B cell (primary cell): ENCODE measurements at regions of chr10 and their contacts with region 1.

Region 1: GRCh38 chr10:123154092-123154921 is at the start of gene BUB3:
- DNase-seq: peak; percentile 99
- ATAC-seq: peak; percentile 89
- H3K4me3 ChIP-seq: peak within 1 kb of the TSS; percentile 71 to 99 (median 99)
- H3K4me3 Mint-ChIP-seq: peak within 1 kb of the TSS; percentile 97
- H3K27ac ChIP-seq: peak within 1 kb of the TSS; percentile 84 to 87
- H3K27ac Mint-ChIP-seq: peak within 1 kb of the TSS; percentile 98
- H3K4me1 ChIP-seq: peaks cover 42 to 43% of the 10 kb centered on the region in 2 donors
- H3K4me1 Mint-ChIP-seq: peaks cover 61% of the 10 kb centered on the region
- H3K27me3 ChIP-seq: peaks cover 0 to 39% (median 29%) of the 10 kb centered on the region in 4 experiments
- H3K27me3 Mint-ChIP-seq: peaks cover 18% of the 10 kb centered on the region
- CTCF ChIP-seq: no peak
- total RNA-seq, gene BUB3: 112 and 115 TPM in 2 replicates

Region 2: GRCh38 chr10:121927841-121928527 is 1226.3 kb before region 1 on chr10 and contains the start of gene ATE1:
- CTCF ChIA-PET with region 1: no interaction called
- POLR2A ChIA-PET with region 1: no interaction called
- intact Hi-C with region 1: loop called (anchors 5 kb)
- DNase-seq: peak; percentile 89
- ATAC-seq: peak; percentile 93
- H3K4me3 ChIP-seq: peak within 1 kb of the TSS; percentile 71 to 99 (median 82)
- H3K4me3 Mint-ChIP-seq: peak within 1 kb of the TSS; percentile 96
- H3K27ac ChIP-seq: peak within 1 kb of the TSS; percentile 96 to 97
- H3K27ac Mint-ChIP-seq: peak within 1 kb of the TSS; percentile 94
- H3K4me1 ChIP-seq: peaks cover 10 to 16% of the 10 kb centered on the region in 2 donors
- H3K4me1 Mint-ChIP-seq: peaks cover 19% of the 10 kb centered on the region
- H3K27me3 ChIP-seq: no peaks in the 10 kb centered on the region
- H3K27me3 Mint-ChIP-seq: no peaks in the 10 kb centered on the region
- CTCF ChIP-seq: no peak
- total RNA-seq, gene ATE1: 32.0 and 40.3 TPM in 2 replicates

Region 3: GRCh38 chr10:123008439-123009205 is 145.7 kb before region 1 on chr10 and contains the starts of genes ACADSB and IKZF5:
- CTCF ChIA-PET with region 1: interaction called, 3 read pairs
- POLR2A ChIA-PET with region 1: interaction called, 4 read pairs
- intact Hi-C with region 1: loop called (anchors 1 kb)
- DNase-seq: peak; percentile 97
- ATAC-seq: peak; percentile 93
- H3K4me3 ChIP-seq: peak within 1 kb of the TSS; percentile 63 to 100 (median 95)
- H3K4me3 Mint-ChIP-seq: peak within 1 kb of the TSS; percentile 98
- H3K27ac ChIP-seq: peak within 1 kb of the TSS; percentile 92 to 98
- H3K27ac Mint-ChIP-seq: peak within 1 kb of the TSS; percentile 98
- H3K4me1 ChIP-seq: peaks cover 22 to 25% of the 10 kb centered on the region in 2 donors
- H3K4me1 Mint-ChIP-seq: peaks cover 48% of the 10 kb centered on the region
- H3K27me3 ChIP-seq: no peaks in the 10 kb centered on the region
- H3K27me3 Mint-ChIP-seq: no peaks in the 10 kb centered on the region
- CTCF ChIP-seq: no peak
- total RNA-seq, gene ACADSB: 27.8 and 27.9 TPM in 2 replicates
- total RNA-seq, gene IKZF5: 24.0 and 24.6 TPM in 2 replicates

Region 4: DNA sequence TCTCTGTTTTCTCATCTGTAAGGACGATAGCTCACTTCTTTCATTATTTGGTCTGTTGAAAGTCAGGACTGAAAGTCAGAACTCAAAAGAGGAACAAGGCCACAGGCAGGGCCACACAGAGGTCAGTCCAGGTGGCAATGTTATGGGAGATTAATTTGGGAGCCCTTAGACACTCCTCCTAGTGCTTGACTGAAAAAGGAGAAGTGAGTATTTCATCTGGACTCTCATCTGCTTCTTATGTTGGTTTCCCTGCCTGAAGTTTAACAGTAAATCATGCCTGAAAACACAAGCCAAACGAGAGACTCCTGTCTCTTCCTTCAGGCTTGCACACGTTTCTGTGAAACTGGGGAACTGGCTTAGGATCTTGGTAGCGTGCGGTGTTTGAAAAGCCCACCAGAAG is 248.3 kb after region 1 on chr10:
- CTCF ChIA-PET with region 1: no interaction called
- POLR2A ChIA-PET with region 1: no interaction called
- intact Hi-C with region 1: loop called (anchors 5 kb)
- DNase-seq: peak; percentile 83
- ATAC-seq: peak; percentile 98
- H3K4me3 ChIP-seq: no peak overlapping the region
- H3K4me3 Mint-ChIP-seq: peak overlapping the region; percentile 67
- H3K27ac ChIP-seq: peak overlapping the region; percentile 20 to 45
- H3K27ac Mint-ChIP-seq: peak overlapping the region; percentile 88
- H3K4me1 ChIP-seq: peaks cover 30 to 56% of the 10 kb centered on the region in 2 donors
- H3K4me1 Mint-ChIP-seq: peaks cover 50% of the 10 kb centered on the region
- H3K27me3 ChIP-seq: no peaks in the 10 kb centered on the region
- H3K27me3 Mint-ChIP-seq: no peaks in the 10 kb centered on the region
- CTCF ChIP-seq: no peak

Region 5: GRCh38 chr10:124916585-124917427 is 1762.5 kb after region 1 on chr10:
- CTCF ChIA-PET with region 1: no interaction called
- POLR2A ChIA-PET with region 1: no interaction called
- intact Hi-C with region 1: loop called (anchors 2 kb)
- DNase-seq: peak; percentile 98
- ATAC-seq: peak; percentile 89
- H3K4me3 ChIP-seq: peak overlapping the region; percentile 63 to 87 (median 79)
- H3K4me3 Mint-ChIP-seq: peak overlapping the region; percentile 90
- H3K27ac ChIP-seq: peak overlapping the region; percentile 81 to 87
- H3K27ac Mint-ChIP-seq: peak overlapping the region; percentile 90
- H3K4me1 ChIP-seq: peaks cover 18 to 20% of the 10 kb centered on the region in 2 donors
- H3K4me1 Mint-ChIP-seq: peaks cover 37% of the 10 kb centered on the region
- H3K27me3 ChIP-seq: peaks cover 0 to 5% (median 3%) of the 10 kb centered on the region in 4 experiments
- H3K27me3 Mint-ChIP-seq: peaks cover 9% of the 10 kb centered on the region
- CTCF ChIP-seq: no peak